T-cell (primary cell): ENCODE measurements at regions of chr9 and their contacts with region 1.

Region 1: DNA sequence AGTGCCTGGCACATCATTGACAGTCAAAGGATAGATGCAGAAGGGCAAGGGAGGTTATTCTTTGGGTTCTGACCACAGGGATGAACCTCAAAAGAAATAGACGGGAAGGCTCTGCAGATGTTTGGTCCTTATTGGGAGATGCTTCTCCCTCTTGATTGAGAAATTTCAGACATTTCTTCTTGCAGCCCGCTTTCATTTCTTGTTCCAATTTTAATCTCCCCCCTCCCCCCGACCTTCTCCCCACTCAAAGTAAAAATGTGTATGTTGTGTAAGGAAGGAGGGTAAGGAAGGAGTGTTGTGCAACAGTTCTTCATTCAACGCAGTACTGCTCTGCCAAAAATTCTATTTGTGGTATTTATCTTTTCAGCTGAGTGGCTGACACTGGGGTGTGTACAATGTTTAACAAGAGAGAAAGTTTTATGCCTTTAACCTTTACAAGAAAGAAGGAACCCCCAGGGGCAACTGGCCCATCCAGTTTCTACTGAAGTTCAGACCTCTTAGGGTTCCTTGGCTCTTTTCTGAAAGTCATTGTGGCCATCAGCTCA is 46.3 kb upstream of the TNFSF15 start:
- DNase-seq: no peak
- ATAC-seq: no peak
- H3K4me3 ChIP-seq: no peak overlapping the region
- H3K4me3 Mint-ChIP-seq: no peak overlapping the region
- H3K27ac ChIP-seq: no peak overlapping the region
- H3K27ac Mint-ChIP-seq: peak overlapping the region in 1 of 2 donors; percentile 18
- H3K4me1 ChIP-seq: no peaks in the 10 kb centered on the region
- H3K4me1 Mint-ChIP-seq: peaks cover 5 to 11% (median 9%) of the 10 kb centered on the region in 3 donors
- H3K27me3 ChIP-seq: no peaks in the 10 kb centered on the region
- H3K27me3 Mint-ChIP-seq: no peaks in the 10 kb centered on the region

Region 2: GRCh38 chr9:114187827-114188226 is 664.3 kb before region 1 on chr9:
- CTCF ChIA-PET with region 1: no interaction called
- POLR2A ChIA-PET with region 1: interaction called in 1 of 2 experiments, 13 read pairs
- DNase-seq: no peak
- ATAC-seq: no peak
- H3K4me3 ChIP-seq: no peak overlapping the region
- H3K4me3 Mint-ChIP-seq: no peak overlapping the region
- H3K27ac ChIP-seq: no peak overlapping the region
- H3K27ac Mint-ChIP-seq: no peak overlapping the region
- H3K4me1 ChIP-seq: no peaks in the 10 kb centered on the region
- H3K4me1 Mint-ChIP-seq: no peaks in the 10 kb centered on the region
- H3K27me3 ChIP-seq: peaks cover 0 to 3% of the 10 kb centered on the region in 2 experiments
- H3K27me3 Mint-ChIP-seq: no peaks in the 10 kb centered on the region

Region 3: DNA sequence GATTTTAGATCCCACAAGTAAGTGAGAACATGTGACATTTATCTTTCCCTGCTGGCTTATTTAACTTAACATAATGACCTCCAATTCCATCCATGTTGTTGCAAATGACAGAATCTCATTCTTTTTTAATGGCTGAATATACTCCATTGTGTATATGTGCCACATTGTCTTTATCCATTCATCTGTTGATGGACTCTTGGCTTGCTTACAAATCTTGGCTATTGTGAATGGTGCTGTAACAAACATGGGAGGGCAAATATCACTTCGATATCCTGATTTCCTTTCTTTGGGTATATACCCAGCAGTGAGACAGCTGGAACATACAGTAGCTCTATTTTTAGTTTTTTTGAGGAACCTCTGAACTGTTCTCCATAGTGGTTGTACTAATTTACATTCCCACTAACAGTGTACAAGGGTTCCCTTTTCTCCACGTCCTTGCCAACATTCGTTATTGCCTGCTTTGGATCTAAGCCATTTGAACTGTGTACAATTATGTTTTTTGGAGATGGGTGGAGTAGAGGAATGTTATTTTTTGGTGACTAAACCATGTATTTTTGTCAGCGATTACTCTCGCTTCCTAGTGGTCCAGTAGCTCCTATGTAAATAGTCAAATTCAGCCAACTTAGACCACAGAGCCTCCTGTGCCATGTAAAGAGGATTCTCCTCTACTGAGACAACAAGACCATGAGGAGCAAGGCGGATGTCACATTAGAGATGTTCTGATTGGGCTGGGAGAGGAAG is 106.8 kb before region 1 on chr9:
- CTCF ChIA-PET with region 1: interaction called in 1 of 2 experiments, 10 read pairs
- POLR2A ChIA-PET with region 1: no interaction called
- DNase-seq: no peak
- ATAC-seq: no peak
- H3K4me3 ChIP-seq: no peak overlapping the region
- H3K4me3 Mint-ChIP-seq: no peak overlapping the region
- H3K27ac ChIP-seq: no peak overlapping the region
- H3K27ac Mint-ChIP-seq: peak overlapping the region in 1 of 2 donors; percentile 3
- H3K4me1 ChIP-seq: no peaks in the 10 kb centered on the region
- H3K4me1 Mint-ChIP-seq: peaks cover 0 to 3% (median 0%) of the 10 kb centered on the region in 3 donors
- H3K27me3 ChIP-seq: no peaks in the 10 kb centered on the region
- H3K27me3 Mint-ChIP-seq: no peaks in the 10 kb centered on the region

Region 4: DNA sequence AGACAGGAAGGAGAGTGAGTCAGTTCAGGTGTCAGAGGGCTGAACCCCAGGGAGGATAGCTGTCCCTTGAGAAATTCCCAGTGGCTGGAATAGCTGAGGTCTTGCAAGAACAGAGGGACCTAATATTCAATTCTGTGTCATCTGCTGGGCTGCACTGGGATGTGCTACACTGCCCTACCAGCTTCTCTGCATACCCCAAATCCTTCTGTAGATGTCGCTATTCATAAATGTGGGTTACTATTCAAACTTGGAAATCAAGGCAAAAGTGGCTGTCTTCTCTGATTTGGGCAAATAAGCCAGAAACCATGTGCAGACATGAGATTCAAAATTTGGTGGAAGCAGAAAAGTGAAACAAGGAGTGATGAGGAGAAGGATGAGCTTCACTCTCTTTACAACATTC is 62.0 kb after region 1 on chr9:
- CTCF ChIA-PET with region 1: no interaction called
- POLR2A ChIA-PET with region 1: no interaction called
- DNase-seq: no peak
- ATAC-seq: no peak
- H3K4me3 ChIP-seq: no peak overlapping the region
- H3K4me3 Mint-ChIP-seq: no peak overlapping the region
- H3K27ac ChIP-seq: no peak overlapping the region
- H3K27ac Mint-ChIP-seq: peak overlapping the region; percentile 85 to 90
- H3K4me1 ChIP-seq: peaks cover 6 to 28% of the 10 kb centered on the region in 2 experiments
- H3K4me1 Mint-ChIP-seq: peaks cover 76 to 94% (median 91%) of the 10 kb centered on the region in 3 donors
- H3K27me3 ChIP-seq: no peaks in the 10 kb centered on the region
- H3K27me3 Mint-ChIP-seq: no peaks in the 10 kb centered on the region

Region 5: GRCh38 chr9:115883457-115884329 is 1031.6 kb after region 1 on chr9:
- CTCF ChIA-PET with region 1: no interaction called
- POLR2A ChIA-PET with region 1: no interaction called
- DNase-seq: no peak
- ATAC-seq: no peak
- H3K4me3 ChIP-seq: no peak overlapping the region
- H3K4me3 Mint-ChIP-seq: no peak overlapping the region
- H3K27ac ChIP-seq: no peak overlapping the region
- H3K27ac Mint-ChIP-seq: no peak overlapping the region
- H3K4me1 ChIP-seq: no peaks in the 10 kb centered on the region
- H3K4me1 Mint-ChIP-seq: no peaks in the 10 kb centered on the region
- H3K27me3 ChIP-seq: no peaks in the 10 kb centered on the region
- H3K27me3 Mint-ChIP-seq: peaks cover 0 to 4% of the 10 kb centered on the region in 2 donors